ENCODE measurements at regions of chr2 and their contacts with region 1.

Region 1: DNA sequence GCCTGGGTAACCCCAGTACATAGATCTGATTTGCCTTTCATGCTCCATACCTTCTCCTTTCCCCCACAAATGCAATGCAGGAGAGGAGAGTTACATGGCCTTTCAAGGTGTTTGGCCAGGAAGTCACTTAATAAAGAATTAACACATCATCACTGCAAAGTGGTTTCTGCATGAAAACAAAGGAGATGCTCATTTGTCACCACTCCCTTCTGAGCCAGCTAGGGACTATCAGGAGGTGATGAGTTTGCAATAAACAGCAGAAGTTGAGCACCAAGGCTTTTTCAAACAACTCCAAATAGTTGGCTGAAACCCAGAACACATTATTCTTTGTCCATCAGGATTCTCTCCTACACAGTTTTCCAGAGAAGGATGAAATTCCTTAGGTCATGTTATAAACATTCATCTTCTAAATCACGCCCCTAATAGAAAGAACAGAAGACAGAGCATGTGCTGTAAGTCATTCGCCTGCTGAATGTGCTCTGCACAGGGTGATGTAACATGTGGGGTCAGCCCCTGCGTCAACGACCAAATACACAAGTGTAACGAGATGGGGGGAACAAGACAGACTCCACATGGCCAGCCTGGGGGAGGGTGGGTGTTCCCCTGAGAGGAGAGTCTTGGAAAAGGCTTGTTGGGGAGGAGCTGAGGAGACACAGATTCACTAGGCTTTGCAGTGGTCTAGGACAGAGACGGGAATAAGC is 87.3 kb upstream of the RMDN2 start:
- DNase-seq: no peak
- H3K4me3 ChIP-seq: no peak overlapping the region
- CTCF ChIP-seq: no peak

Region 2: DNA sequence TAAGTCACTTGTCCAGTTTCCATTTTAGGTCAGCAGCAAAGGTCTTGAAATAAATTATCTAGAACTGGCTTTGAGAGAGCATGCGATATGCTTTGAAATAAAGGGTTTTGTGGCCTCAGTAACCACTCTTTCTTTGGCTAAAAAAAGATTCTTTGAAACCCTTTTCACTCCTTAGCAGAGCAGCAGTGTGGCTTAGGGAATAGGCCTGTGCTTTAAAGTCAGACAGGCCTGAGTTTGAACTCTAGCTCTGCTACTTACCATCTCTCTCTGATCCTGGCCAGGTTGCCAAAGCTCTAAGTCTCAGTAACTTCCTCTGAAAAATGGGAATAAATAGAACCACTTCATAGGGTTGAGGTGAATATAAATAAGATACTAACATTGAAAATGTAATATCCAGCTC is 440.6 kb before region 1 on chr2:
- CTCF ChIA-PET with region 1: interaction called, 32 read pairs
- POLR2A ChIA-PET with region 1: no interaction called
- DNase-seq: no peak
- H3K4me3 ChIP-seq: no peak overlapping the region
- CTCF ChIP-seq: no peak

Region 3: GRCh38 chr2:37934591-37935513 is 97.1 kb after region 1 on chr2:
- CTCF ChIA-PET with region 1: no interaction called
- POLR2A ChIA-PET with region 1: no interaction called
- DNase-seq: no peak
- H3K4me3 ChIP-seq: no peak overlapping the region
- CTCF ChIP-seq: no peak